Thyroid gland (tissue), 4 donors: ENCODE measurements at regions of chr17 and their contacts with region 1.

Region 1: GRCh38 chr17:8991514-8992285 is 26.2 kb upstream of the PIK3R5 start:
- DNase-seq: peak; percentile 54 to 59
- H3K4me3 ChIP-seq: no peak overlapping the region
- H3K27ac ChIP-seq: no peak overlapping the region
- H3K4me1 ChIP-seq: no peaks in the 10 kb centered on the region
- H3K27me3 ChIP-seq: no peaks in the 10 kb centered on the region
- CTCF ChIP-seq: peak; percentile 28 to 71 (median 56)
- POLR2A ChIP-seq: no peak

Region 2: DNA sequence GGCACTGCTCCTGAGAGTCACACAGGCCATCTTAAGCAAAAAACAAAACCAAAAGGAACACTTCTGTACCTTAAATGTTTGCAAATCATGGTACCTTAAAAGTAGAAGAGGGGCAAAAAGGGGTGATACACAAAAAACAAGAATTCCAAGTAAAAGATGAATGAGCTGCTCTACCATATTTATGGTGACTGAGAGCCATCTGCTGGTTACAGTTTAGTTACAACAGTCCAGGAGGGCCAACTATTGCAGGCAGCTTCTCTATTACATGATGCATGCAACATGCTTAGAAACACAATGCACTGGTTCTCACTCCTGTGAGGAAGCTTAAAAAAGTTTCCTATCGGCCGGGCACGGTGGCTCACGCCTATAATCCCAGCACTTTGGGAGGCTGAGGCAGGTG is 530.4 kb after region 1 on chr17:
- intact Hi-C with region 1: loop called (anchors 10 kb)
- DNase-seq: no peak
- H3K4me3 ChIP-seq: no peak overlapping the region
- H3K27ac ChIP-seq: no peak overlapping the region
- H3K4me1 ChIP-seq: no peaks in the 10 kb centered on the region
- H3K27me3 ChIP-seq: no peaks in the 10 kb centered on the region
- CTCF ChIP-seq: peak in 3 of 6 experiments; percentile 26 to 45 (median 35)
- POLR2A ChIP-seq: no peak